ENCODE measurements at regions of chr18 and their contacts with region 1.

Region 1: GRCh38 chr18:69948919-69949537 is 1.4 kb upstream of the CD226 start:
- DNase-seq: no peak
- ATAC-seq: peak; percentile 90
- H3K4me3 Mint-ChIP-seq: no peak overlapping the region
- H3K27ac Mint-ChIP-seq: no peak overlapping the region
- H3K4me1 Mint-ChIP-seq: peaks cover 2% of the 10 kb centered on the region
- H3K27me3 Mint-ChIP-seq: no peaks in the 10 kb centered on the region
- CTCF ChIP-seq: no peak

Region 2: GRCh38 chr18:69400253-69400975 is 548.6 kb before region 1 on chr18 and contains the start of gene DOK6:
- CTCF ChIA-PET with region 1: no interaction called
- POLR2A ChIA-PET with region 1: no interaction called
- intact Hi-C with region 1: no loop called
- DNase-seq: no peak
- ATAC-seq: no peak
- H3K4me3 Mint-ChIP-seq: no peak within 1 kb of the TSS
- H3K27ac Mint-ChIP-seq: no peak within 1 kb of the TSS
- H3K4me1 Mint-ChIP-seq: peaks cover 5% of the 10 kb centered on the region
- H3K27me3 Mint-ChIP-seq: peaks cover 32% of the 10 kb centered on the region
- CTCF ChIP-seq: no peak
- total RNA-seq, gene DOK6: not detected in 2 replicates

Region 3: GRCh38 chr18:69882965-69883668 is 65.9 kb before region 1 on chr18:
- CTCF ChIA-PET with region 1: no interaction called
- POLR2A ChIA-PET with region 1: no interaction called
- intact Hi-C with region 1: loop called (anchors 2 kb)
- DNase-seq: no peak
- ATAC-seq: peak; percentile 85
- H3K4me3 Mint-ChIP-seq: peak overlapping the region; percentile 33
- H3K27ac Mint-ChIP-seq: peak overlapping the region; percentile 65
- H3K4me1 Mint-ChIP-seq: peaks cover 25% of the 10 kb centered on the region
- H3K27me3 Mint-ChIP-seq: peaks cover 3% of the 10 kb centered on the region
- CTCF ChIP-seq: no peak

Region 4: GRCh38 chr18:69935319-69936190 is 13.5 kb before region 1 on chr18:
- CTCF ChIA-PET with region 1: no interaction called
- POLR2A ChIA-PET with region 1: no interaction called
- intact Hi-C with region 1: loop called (anchors 1 kb)
- DNase-seq: no peak
- ATAC-seq: peak; percentile 72
- H3K4me3 Mint-ChIP-seq: no peak overlapping the region
- H3K27ac Mint-ChIP-seq: peak overlapping the region; percentile 30
- H3K4me1 Mint-ChIP-seq: peaks cover 9% of the 10 kb centered on the region
- H3K27me3 Mint-ChIP-seq: no peaks in the 10 kb centered on the region
- CTCF ChIP-seq: no peak